ENCODE measurements at regions of chr19 and their contacts with region 1.

Region 1: DNA sequence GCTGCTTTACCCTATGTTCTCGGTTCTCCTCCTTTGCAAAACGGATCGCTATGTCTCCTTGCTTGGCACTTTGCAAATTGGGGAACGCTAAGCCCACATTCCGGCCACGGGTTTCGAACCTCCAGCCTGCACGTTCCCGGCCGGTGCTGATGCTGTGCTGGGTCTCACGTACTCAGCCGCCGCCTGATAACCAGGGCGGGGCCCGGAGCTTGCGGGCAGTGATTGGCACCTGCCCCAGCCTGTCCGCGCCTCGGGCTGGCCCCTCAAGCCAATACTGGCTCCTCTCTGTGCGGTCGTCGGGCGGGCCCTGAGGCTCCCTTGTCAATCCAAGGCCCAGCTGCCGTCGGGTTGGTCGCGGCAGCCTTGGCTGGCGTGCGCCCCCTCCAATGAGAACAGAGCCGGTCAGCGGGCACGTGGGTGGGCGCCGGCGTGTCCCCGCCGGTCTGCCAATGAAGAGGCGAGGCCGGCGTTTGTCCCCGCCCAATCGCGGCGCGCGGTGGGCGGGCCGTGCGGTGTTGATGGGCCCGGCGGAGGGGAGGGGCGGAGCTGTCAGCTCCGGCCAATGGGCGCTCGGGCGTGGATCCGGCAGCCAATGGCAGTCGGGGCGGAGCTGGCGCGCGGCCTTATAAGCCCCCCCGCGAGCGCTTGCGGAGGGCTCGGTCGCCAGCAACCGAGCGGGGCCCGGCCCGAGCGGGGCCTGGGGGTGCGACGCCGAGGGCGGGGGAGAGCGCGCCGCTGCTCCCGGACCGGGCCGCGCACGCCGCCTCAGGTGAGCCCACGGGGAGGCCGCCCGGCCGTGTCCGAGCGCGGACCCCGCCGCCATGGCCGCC is at the start of gene KDM4B:
- DNase-seq: peak; percentile 98 to 99 (median 99)
- ATAC-seq: peak; percentile 97
- H3K4me3 ChIP-seq: peak within 1 kb of the TSS; percentile 61
- H3K27ac ChIP-seq: peak within 1 kb of the TSS; percentile 59
- H3K4me1 ChIP-seq: peaks cover 16 to 52% of the 10 kb centered on the region in 2 experiments; a peak in 4 of 5 replicates
- H3K27me3 ChIP-seq: no peaks in the 10 kb centered on the region; a peak in 1 of 5 replicates
- CTCF ChIP-seq: peak in 1 of 3 experiments; percentile 18; a peak in 1 of 6 replicates
- EP300 ChIP-seq: no peak
- POLR2A ChIP-seq: peak; percentile 64; the same call in 1 of the 2 replicates
- RAD21 ChIP-seq: no peak
- polyA plus RNA-seq, gene KDM4B: 0.21 to 0.25 TPM

Region 2: DNA sequence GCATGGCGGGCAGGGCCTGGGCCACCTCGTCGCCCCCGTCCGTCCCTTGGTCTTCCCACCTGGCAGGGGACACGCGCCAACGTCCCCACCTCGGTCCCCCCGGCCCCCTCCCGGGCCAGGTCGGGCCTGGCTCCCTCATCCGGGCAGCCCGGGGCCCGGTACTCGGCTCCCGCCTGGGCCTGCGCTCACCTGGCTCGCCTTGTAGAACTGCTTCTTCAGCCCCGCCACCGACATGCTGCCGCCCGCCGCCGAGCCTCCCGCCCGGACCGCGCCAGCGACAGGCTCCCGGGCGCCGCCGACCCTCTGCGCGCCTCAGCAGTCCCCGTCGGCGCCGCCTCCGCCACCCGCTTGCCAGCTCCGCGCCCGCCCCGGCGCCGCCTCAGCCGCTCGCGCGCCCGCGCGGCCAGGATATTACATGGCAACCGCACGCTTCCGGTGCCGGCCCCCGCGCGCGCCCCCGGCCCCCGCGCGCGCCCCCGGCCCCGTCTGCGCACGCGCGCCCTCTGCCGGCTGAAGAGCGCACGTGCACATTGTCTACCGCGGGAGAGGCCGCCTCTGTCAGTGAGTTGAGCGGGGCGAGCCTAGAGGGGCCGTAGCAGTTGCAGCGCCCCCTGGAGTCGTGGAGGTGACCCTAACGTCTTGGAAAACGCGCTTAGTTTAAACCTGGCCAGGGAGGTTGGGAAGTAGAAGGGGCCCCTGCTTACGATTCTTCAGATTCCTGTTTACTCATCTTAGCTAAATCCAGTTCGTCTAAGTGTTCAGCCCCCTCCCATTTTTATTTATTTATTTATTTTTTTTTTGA is 568.3 kb before region 1 on chr19 and contains the start of gene SH3GL1:
- CTCF ChIA-PET with region 1: no interaction called
- POLR2A ChIA-PET with region 1: no interaction called
- in situ Hi-C with region 1: no loop called
- intact Hi-C with region 1: no loop called
- DNase-seq: peak; percentile 80 to 95 (median 86)
- ATAC-seq: peak; percentile 54
- H3K4me3 ChIP-seq: peak within 1 kb of the TSS; percentile 99
- H3K27ac ChIP-seq: peak within 1 kb of the TSS; percentile 94
- H3K4me1 ChIP-seq: peaks cover 22 to 23% of the 10 kb centered on the region in 2 experiments; a peak in 4 of 5 replicates
- H3K27me3 ChIP-seq: no peaks in the 10 kb centered on the region
- CTCF ChIP-seq: peak; percentile 93 to 98 (median 98)
- EP300 ChIP-seq: peak; percentile 62
- POLR2A ChIP-seq: no peak
- RAD21 ChIP-seq: peak; percentile 52 to 63
- polyA plus RNA-seq, gene SH3GL1: 1.7 to 2.1 TPM

Region 3: GRCh38 chr19:4988770-4989251 is 20.1 kb after region 1 on chr19:
- CTCF ChIA-PET with region 1: no interaction called
- POLR2A ChIA-PET with region 1: interaction called, 10 read pairs
- in situ Hi-C with region 1: no loop called
- intact Hi-C with region 1: no loop called
- DNase-seq: no peak
- ATAC-seq: no peak
- H3K4me3 ChIP-seq: no peak overlapping the region
- H3K27ac ChIP-seq: no peak overlapping the region
- H3K4me1 ChIP-seq: peaks cover 27 to 54% of the 10 kb centered on the region in 2 experiments
- H3K27me3 ChIP-seq: no peaks in the 10 kb centered on the region
- CTCF ChIP-seq: no peak
- EP300 ChIP-seq: no peak
- POLR2A ChIP-seq: no peak
- RAD21 ChIP-seq: no peak

Region 4: GRCh38 chr19:5001615-5002014 is 32.9 kb after region 1 on chr19:
- CTCF ChIA-PET with region 1: no interaction called
- POLR2A ChIA-PET with region 1: interaction called, 10 read pairs
- in situ Hi-C with region 1: no loop called
- intact Hi-C with region 1: no loop called
- DNase-seq: peak; percentile 66 to 76 (median 70)
- ATAC-seq: peak; percentile 92
- H3K4me3 ChIP-seq: no peak overlapping the region
- H3K27ac ChIP-seq: no peak overlapping the region
- H3K4me1 ChIP-seq: peaks cover 0 to 18% of the 10 kb centered on the region in 2 experiments; a peak in 2 of 5 replicates
- H3K27me3 ChIP-seq: no peaks in the 10 kb centered on the region
- CTCF ChIP-seq: peak; percentile 75 to 92 (median 80)
- EP300 ChIP-seq: no peak
- POLR2A ChIP-seq: no peak
- RAD21 ChIP-seq: peak in 1 of 2 experiments; percentile 56; a peak in 2 of 4 replicates

Measured in K562 (cell line).